ENCODE measurements at regions of chr11 and their contacts with region 1.

Region 1: GRCh38 chr11:86418917-86419316 is 44.2 kb downstream of the CCDC81 start:
- DNase-seq: peak in 1 of 4 experiments; percentile 38
- ATAC-seq: peak; percentile 84
- H3K4me3 ChIP-seq: no peak overlapping the region
- H3K27ac ChIP-seq: no peak overlapping the region
- H3K4me1 ChIP-seq: peaks cover 0 to 10% of the 10 kb centered on the region in 2 experiments; a peak in 3 of 5 replicates
- H3K27me3 ChIP-seq: peaks cover 0 to 8% of the 10 kb centered on the region in 2 experiments; a peak in 1 of 5 replicates
- CTCF ChIP-seq: peak in 2 of 3 experiments; percentile 53 to 61; a peak in 4 of 6 replicates
- EP300 ChIP-seq: no peak
- POLR2A ChIP-seq: no peak
- RAD21 ChIP-seq: peak; percentile 51 to 66

Region 2: GRCh38 chr11:85941380-85941973 is 477.4 kb before region 1 on chr11:
- CTCF ChIA-PET with region 1: no interaction called
- POLR2A ChIA-PET with region 1: no interaction called
- in situ Hi-C with region 1: no loop called
- intact Hi-C with region 1: loop called (anchors 5 kb)
- DNase-seq: peak; percentile 38 to 69 (median 52)
- ATAC-seq: peak; percentile 92
- H3K4me3 ChIP-seq: no peak overlapping the region
- H3K27ac ChIP-seq: no peak overlapping the region
- H3K4me1 ChIP-seq: no peaks in the 10 kb centered on the region; a peak in 1 of 5 replicates
- H3K27me3 ChIP-seq: no peaks in the 10 kb centered on the region
- CTCF ChIP-seq: peak; percentile 73 to 86 (median 82)
- EP300 ChIP-seq: no peak
- POLR2A ChIP-seq: no peak
- RAD21 ChIP-seq: peak; percentile 72 to 89

Region 3: DNA sequence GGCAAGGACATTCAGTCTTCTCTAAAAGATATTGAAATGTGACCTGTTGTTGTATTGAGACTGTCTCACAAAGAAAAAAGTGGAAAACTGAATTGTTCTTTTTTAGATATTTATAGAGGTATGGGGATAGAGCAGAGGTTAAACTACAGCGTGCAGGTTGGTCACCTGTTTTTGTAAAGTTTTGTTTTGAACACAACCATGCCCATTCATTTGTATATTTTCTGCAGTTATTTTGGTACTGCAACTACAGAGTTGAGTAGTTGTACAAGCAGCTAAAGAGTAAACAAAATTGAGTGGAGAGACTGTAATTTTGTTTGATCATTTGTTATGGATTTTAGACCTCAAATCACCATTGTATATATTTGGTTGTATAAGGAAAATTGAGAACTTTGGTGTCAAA is 163.0 kb before region 1 on chr11:
- CTCF ChIA-PET with region 1: no interaction called
- POLR2A ChIA-PET with region 1: no interaction called
- in situ Hi-C with region 1: no loop called
- intact Hi-C with region 1: no loop called
- DNase-seq: no peak
- ATAC-seq: no peak
- H3K4me3 ChIP-seq: no peak overlapping the region
- H3K27ac ChIP-seq: no peak overlapping the region
- H3K4me1 ChIP-seq: no peaks in the 10 kb centered on the region
- H3K27me3 ChIP-seq: no peaks in the 10 kb centered on the region
- CTCF ChIP-seq: no peak
- EP300 ChIP-seq: no peak
- POLR2A ChIP-seq: no peak
- RAD21 ChIP-seq: no peak

Region 4: DNA sequence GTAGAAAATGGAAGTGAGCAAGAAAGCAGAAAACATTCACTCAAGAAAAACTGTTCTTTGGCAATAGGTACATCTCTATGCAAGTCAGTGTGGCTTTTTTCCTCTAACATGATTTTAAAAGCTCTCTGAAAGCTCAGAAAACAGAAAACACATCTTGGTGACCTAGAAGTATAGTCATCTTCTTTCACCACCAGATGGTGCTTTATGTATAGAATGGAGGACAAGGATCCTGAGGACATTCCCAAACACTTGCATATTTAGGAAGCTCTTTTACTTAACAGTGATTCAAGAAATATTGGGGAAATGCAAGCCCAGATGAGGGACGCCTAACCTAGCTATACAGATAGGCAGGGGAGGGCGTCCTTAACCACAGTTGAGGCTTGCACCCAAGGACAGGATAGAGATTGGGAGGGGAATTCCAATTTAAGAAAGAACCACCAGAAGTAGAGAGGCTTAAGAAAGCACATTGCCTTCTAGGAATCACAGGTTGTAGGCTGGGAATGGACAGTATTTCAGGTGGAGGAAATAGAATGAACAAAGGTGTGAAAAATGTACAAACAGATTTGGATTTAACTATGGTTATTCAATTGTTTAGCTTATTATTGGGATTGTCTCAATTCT is 58.0 kb before region 1 on chr11:
- CTCF ChIA-PET with region 1: no interaction called
- POLR2A ChIA-PET with region 1: no interaction called
- in situ Hi-C with region 1: no loop called
- intact Hi-C with region 1: loop called (anchors 2 kb)
- DNase-seq: peak in 1 of 4 experiments; percentile 13
- ATAC-seq: peak; percentile 64
- H3K4me3 ChIP-seq: no peak overlapping the region
- H3K27ac ChIP-seq: no peak overlapping the region
- H3K4me1 ChIP-seq: no peaks in the 10 kb centered on the region; a peak in 1 of 5 replicates
- H3K27me3 ChIP-seq: no peaks in the 10 kb centered on the region
- CTCF ChIP-seq: peak; percentile 12 to 53 (median 14); a peak in 3 of 6 replicates
- EP300 ChIP-seq: no peak
- POLR2A ChIP-seq: no peak
- RAD21 ChIP-seq: peak; percentile 47 to 79

Region 5: GRCh38 chr11:86688398-86689179 is 269.7 kb after region 1 on chr11:
- CTCF ChIA-PET with region 1: no interaction called
- POLR2A ChIA-PET with region 1: no interaction called
- in situ Hi-C with region 1: no loop called
- intact Hi-C with region 1: no loop called
- DNase-seq: no peak
- ATAC-seq: no peak
- H3K4me3 ChIP-seq: no peak overlapping the region
- H3K27ac ChIP-seq: no peak overlapping the region
- H3K4me1 ChIP-seq: no peaks in the 10 kb centered on the region
- H3K27me3 ChIP-seq: no peaks in the 10 kb centered on the region; a peak in 1 of 5 replicates
- CTCF ChIP-seq: no peak
- EP300 ChIP-seq: no peak
- POLR2A ChIP-seq: no peak
- RAD21 ChIP-seq: no peak

Measured in K562 (cell line).